ENCODE measurements at regions of chr5 and their contacts with region 1.

Region 1: DNA sequence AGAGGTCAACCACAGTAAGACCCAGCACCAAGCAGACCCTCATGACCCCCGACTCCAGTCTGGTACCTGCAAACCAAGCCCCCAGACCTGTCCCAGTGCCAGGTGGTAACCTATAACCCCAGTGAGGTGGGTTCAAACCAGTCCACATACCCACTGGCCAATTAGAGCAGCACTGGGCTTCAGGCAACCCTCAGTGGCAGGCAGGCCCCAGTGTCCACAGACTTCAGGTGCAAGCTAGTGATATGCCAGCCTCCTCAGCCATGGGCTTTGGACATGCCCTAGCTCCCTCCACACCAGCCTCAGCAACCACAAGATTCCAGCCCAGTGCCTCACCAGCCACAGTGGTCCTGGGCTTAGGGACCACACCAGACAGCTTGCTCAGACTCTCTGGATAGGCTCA is 276.6 kb downstream of the DTWD2 start:
- DNase-seq: no peak
- ATAC-seq: no peak
- H3K4me3 ChIP-seq: no peak overlapping the region
- H3K27ac ChIP-seq: no peak overlapping the region
- H3K4me1 ChIP-seq: no peaks in the 10 kb centered on the region
- H3K27me3 ChIP-seq: no peaks in the 10 kb centered on the region
- CTCF ChIP-seq: no peak
- EP300 ChIP-seq: no peak
- POLR2A ChIP-seq: no peak
- RAD21 ChIP-seq: no peak

Region 2: DNA sequence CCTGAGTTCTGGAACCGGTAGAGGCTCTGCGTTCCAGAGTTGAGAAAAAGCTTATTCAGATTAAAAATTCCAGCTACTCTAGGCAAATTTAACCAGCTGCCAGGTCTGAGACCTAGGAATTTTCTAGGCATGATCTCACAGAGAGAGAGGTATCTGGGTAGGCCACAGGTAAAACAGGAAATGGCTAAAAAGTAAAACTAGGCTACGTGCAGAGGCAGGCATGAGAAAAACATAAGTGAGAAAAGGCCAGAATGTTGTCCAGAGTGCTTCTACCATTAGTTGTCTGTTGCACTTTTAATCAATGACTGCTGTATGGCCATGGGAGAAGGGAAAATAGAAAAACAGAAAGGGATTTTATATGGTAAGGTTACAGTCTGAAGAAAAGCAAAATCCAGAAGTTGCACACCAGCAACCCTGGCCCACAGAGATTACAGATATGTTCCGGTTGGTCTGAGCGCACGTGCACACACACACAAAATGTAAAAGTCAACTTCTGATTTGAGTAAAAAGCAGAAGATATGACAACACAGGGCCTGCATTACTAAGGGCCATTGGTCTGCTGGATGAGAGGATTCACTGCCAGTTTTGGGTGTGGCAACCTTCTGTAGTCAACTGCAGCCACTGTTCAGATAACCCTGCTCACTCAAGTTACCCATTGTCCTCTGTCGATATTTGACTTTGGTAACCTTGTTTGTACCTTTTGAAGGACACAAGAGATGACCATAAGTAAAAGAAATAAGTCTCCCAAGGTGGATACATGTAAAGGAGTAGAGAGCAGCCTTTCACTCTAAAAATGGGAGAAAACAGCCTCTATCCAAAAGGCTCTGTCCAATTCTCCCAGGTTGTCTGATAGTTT is 10.7 kb after region 1 on chr5:
- CTCF ChIA-PET with region 1: no interaction called
- POLR2A ChIA-PET with region 1: no interaction called
- in situ Hi-C with region 1: no loop called
- intact Hi-C with region 1: loop called (anchors 1 kb)
- DNase-seq: no peak
- ATAC-seq: no peak
- H3K4me3 ChIP-seq: no peak overlapping the region
- H3K27ac ChIP-seq: no peak overlapping the region
- H3K4me1 ChIP-seq: no peaks in the 10 kb centered on the region
- H3K27me3 ChIP-seq: no peaks in the 10 kb centered on the region
- CTCF ChIP-seq: no peak
- EP300 ChIP-seq: no peak
- POLR2A ChIP-seq: no peak
- RAD21 ChIP-seq: no peak

Measured in K562 (cell line).